OCI-LY7 (cell line): ENCODE measurements at regions of chr17 and their contacts with region 1.

Region 1: DNA sequence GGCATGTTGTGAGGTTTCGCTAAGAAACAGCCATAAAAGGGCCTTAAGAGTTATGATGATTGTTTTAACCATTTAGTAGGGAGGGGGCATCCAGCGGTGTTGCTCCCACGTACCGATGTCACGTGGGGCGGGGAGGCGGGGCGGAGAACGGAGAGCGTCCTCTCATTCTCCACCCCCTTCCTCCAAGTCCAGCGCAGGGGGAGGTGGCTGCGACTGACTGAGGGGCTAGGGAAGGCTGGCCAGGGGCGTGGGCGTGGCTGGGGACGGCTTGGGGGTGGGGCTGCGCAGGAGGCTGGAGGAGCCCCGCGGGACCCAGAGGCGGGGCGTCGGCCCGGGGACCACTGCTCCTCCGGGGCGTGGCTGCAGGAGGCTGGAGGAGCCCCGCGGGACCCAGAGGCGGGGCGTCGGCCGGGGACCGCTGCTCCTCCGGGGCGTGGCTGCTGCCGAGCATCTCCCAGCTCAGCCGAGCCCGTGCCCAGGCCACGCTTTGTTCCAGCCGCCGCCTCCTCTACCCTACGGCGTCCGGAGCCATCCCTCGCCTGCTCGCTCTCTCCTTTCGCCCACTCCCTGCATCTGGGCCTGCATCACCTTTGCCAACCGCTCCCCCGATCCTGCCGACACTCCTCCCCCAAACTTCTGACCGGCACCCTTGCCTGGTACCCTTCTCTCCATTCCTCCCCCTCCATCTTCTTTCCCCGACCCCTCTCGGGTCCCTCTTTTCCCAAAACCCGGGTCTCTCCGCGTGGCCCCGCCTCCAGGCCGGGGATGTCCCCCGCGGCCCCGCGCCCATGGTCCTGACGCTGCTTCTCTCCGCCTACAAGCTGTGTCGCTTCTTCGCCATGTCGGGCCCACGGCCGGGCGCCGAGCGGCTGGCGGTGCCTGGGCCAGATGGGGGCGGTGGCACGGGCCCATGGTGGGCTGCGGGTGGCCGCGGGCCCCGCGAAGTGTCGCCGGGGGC is at the start of gene SARM1:
- DNase-seq: peak; percentile 91
- H3K4me3 ChIP-seq: peak within 1 kb of the TSS; percentile 80
- H3K27ac ChIP-seq: peak within 1 kb of the TSS; percentile 32
- H3K4me1 ChIP-seq: peaks cover 20% of the 10 kb centered on the region
- CTCF ChIP-seq: no peak
- total RNA-seq, gene SARM1: 4.7 and 7.5 TPM in 2 replicates

Region 2: DNA sequence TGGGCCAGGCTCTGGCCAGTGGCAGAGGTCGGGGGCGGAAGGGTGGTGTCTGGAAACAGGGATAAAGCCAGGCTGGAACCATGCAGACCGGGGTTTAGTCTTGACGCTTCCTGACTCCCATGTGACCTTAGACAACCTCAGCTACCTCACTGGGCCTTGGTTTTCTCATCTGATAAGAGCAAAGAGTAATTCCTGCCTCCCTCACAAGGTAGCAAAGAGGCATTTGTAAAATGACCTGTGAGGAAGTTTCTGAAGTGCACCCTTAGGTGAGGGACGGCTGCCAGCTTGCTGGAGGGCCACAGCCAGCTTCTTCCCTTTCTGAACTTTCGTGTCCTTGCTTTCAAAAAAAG is 130.6 kb before region 1 on chr17:
- CTCF ChIA-PET with region 1: no interaction called
- POLR2A ChIA-PET with region 1: no interaction called
- intact Hi-C with region 1: no loop called
- DNase-seq: no peak
- H3K4me3 ChIP-seq: no peak overlapping the region
- H3K27ac ChIP-seq: no peak overlapping the region
- H3K4me1 ChIP-seq: no peaks in the 10 kb centered on the region
- CTCF ChIP-seq: no peak

Region 3: DNA sequence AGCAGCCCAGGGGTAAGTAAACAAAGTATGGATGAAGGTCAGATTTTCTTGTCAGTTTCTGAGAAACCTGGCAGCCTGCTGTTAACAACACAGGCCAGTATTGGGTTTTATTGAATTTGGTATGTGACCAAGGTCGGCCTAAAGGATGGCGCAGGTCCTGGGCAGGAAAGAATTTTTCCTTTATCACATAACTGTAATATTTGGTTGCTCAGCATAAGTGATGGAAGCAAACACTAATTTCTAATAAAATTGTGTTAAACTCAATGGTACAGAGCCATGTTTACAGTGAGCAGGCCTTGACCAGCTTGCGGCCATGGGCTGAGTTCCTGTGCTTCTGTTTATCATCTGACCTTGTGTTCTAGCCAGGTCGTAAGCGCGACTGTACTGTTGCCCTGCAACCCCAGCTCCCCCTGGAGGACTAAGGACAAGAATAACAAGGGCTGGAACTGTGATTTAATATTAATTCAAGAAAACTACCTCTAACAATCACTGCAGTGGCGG is 24.7 kb before region 1 on chr17:
- CTCF ChIA-PET with region 1: no interaction called
- POLR2A ChIA-PET with region 1: no interaction called
- intact Hi-C with region 1: no loop called
- DNase-seq: no peak
- H3K4me3 ChIP-seq: no peak overlapping the region
- H3K27ac ChIP-seq: no peak overlapping the region
- H3K4me1 ChIP-seq: peaks cover 32% of the 10 kb centered on the region
- CTCF ChIP-seq: peak; percentile 59

Region 4: GRCh38 chr17:28357061-28357900 is 14.2 kb before region 1 on chr17 and contains the start of gene POLDIP2:
- CTCF ChIA-PET with region 1: no interaction called
- POLR2A ChIA-PET with region 1: interaction called, 11 read pairs
- intact Hi-C with region 1: loop called (anchors 1 kb)
- DNase-seq: peak; percentile 96
- H3K4me3 ChIP-seq: peak within 1 kb of the TSS; percentile 89
- H3K27ac ChIP-seq: peak within 1 kb of the TSS; percentile 32
- H3K4me1 ChIP-seq: peaks cover 21% of the 10 kb centered on the region
- CTCF ChIP-seq: 0 out of 2 replicates have a peak, but pooled peaks have one; percentile 18
- total RNA-seq, gene POLDIP2: 82.2 and 88.8 TPM in 2 replicates

Region 5: DNA sequence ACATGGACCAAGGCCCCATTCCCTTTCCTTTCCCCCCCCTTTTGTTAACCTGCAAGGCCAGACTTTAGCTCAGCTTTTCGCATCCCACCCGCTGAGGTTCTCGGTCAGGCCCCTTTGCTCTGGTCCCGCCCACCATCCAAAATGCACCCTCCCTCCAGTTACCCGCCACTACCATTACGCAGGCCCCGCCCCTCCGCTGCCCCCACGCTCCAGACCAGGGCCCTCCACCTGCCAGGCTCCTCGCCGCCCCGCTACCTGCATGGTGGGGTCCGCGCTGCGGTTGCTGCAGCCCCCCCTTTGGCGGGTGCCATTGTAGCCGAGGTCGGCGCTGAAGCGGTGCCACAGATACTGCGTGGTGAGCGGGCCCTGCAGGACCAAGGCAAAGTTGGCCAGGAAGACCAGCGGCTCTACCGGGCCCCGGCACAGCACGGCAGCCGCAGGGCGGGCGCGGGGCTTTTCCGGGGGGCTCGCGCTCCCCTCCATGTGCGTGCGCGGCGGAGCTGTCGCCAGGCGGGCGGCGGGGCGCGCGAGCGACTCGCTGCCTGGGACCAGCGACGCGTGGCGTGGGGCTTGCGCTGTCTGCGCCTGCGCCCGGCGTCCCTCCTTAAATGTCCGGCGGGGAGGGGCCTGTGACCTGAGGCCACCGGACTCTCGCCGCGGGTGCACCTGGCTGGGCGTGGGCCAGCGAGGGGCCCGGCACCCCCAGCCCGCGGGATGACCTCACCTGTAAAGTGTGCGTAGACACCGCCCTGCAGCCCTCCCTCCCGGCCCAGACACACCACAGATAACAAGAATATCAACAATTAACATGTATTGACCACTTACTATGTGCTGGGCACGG is 34.3 kb after region 1 on chr17 and contains the start of gene SLC46A1:
- CTCF ChIA-PET with region 1: no interaction called
- POLR2A ChIA-PET with region 1: no interaction called
- intact Hi-C with region 1: no loop called
- DNase-seq: no peak
- H3K4me3 ChIP-seq: peak within 1 kb of the TSS; percentile 54
- H3K27ac ChIP-seq: no peak within 1 kb of the TSS
- H3K4me1 ChIP-seq: no peaks in the 10 kb centered on the region
- CTCF ChIP-seq: no peak
- total RNA-seq, gene SLC46A1: 0.85 and 1.5 TPM in 2 replicates

Region 6: GRCh38 chr17:28446728-28447395 is 75.3 kb after region 1 on chr17:
- CTCF ChIA-PET with region 1: no interaction called
- POLR2A ChIA-PET with region 1: no interaction called
- intact Hi-C with region 1: no loop called
- DNase-seq: no peak
- H3K4me3 ChIP-seq: no peak overlapping the region
- H3K27ac ChIP-seq: no peak overlapping the region
- H3K4me1 ChIP-seq: no peaks in the 10 kb centered on the region
- CTCF ChIP-seq: no peak